ENCODE measurements at regions of chr5 and their contacts with region 1.

Region 1: GRCh38 chr5:39148983-39149534 is 70.3 kb downstream of the FYB1 start:
- DNase-seq: peak; percentile 24
- ATAC-seq: 0 out of 2 replicates have a peak, but pooled peaks have one; percentile 37
- H3K4me3 ChIP-seq: no peak overlapping the region
- H3K27ac ChIP-seq: no peak overlapping the region
- H3K4me1 ChIP-seq: no peaks in the 10 kb centered on the region
- H3K27me3 ChIP-seq: no peaks in the 10 kb centered on the region
- CTCF ChIP-seq: peak; percentile 37
- POLR2A ChIP-seq: no peak
- RAD21 ChIP-seq: peak; percentile 38

Region 2: DNA sequence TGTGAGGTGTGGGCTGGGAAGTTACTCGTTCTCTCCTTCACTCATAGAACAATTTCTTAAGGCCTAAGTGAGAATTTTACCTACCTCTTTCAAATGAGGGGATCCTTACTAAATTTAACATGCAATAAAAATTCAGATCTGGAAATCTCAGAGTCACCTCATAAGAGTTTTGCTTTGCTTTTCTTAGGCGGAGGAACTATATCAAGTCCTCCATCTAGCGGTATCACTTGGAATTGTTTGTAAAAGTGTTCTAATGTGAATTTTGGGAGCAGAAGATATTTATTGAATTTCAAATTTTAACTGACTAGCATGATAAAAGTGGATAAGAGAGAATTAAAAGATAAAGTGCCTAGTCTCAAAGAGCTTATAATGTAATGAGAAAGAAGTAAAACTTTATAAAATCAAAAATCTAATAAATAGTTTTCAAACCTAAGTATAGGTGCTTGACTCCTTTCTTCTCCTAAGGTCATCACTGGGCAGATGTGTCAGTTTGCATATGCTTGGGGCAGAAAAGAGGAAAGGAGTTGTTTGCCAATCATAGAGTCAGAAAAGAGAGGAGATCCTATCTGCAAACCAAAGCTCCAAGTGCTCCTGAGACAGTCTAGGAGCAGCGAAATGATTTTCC is 421.5 kb after region 1 on chr5:
- CTCF ChIA-PET with region 1: no interaction called
- POLR2A ChIA-PET with region 1: no interaction called
- dilution Hi-C with region 1: no loop called
- in situ Hi-C with region 1: no loop called
- intact Hi-C with region 1: loop called (anchors 2 kb)
- DNase-seq: peak; percentile 61
- ATAC-seq: peak; percentile 79
- H3K4me3 ChIP-seq: no peak overlapping the region
- H3K27ac ChIP-seq: no peak overlapping the region
- H3K4me1 ChIP-seq: no peaks in the 10 kb centered on the region
- H3K27me3 ChIP-seq: peaks cover 13% of the 10 kb centered on the region
- CTCF ChIP-seq: peak; percentile 79
- POLR2A ChIP-seq: no peak
- RAD21 ChIP-seq: peak; percentile 82

Measured in IMR-90 (cell line).